ENCODE measurements at regions of chr7 and their contacts with region 1.

Region 1: DNA sequence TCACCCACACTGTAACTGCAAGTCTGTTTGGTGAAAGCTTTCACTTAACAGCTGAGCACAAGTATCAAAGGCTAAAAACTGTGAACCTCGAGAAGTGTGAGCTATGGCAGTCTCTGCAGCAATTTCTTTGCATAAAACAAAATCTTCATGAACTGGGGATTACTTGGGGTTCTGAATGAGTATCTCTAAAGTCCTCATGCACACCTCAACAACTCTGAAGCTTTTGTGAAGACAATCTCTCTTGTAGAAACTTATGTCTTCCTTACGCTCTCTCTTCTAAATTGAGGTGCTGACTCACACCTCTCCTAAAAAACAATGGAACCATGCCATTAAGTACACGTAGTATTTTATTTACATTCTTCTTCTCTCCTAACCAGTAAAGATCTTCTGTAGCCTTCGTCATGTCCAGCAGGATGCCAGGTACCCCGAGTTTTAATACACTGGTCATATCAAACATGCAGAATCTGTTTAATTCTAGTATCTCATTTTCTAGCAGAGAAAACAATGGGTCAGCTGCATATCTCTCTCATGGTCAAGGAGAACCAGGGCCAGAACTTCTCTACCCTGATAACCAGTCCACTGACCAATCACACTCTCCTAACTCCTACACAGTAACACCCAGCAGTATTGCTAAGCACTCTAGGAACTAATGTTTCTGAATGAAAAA is 76.9 kb downstream of the UBE2H start:
- DNase-seq: no peak
- H3K4me3 ChIP-seq: peak overlapping the region in 1 of 4 donors; percentile 8
- H3K27ac ChIP-seq: peak overlapping the region; percentile 5 to 62 (median 56)
- H3K4me1 ChIP-seq: peaks cover 0 to 40% (median 26%) of the 10 kb centered on the region in 4 donors
- H3K27me3 ChIP-seq: no peaks in the 10 kb centered on the region
- CTCF ChIP-seq: no peak
- EP300 ChIP-seq: no peak
- POLR2A ChIP-seq: no peak

Region 2: DNA sequence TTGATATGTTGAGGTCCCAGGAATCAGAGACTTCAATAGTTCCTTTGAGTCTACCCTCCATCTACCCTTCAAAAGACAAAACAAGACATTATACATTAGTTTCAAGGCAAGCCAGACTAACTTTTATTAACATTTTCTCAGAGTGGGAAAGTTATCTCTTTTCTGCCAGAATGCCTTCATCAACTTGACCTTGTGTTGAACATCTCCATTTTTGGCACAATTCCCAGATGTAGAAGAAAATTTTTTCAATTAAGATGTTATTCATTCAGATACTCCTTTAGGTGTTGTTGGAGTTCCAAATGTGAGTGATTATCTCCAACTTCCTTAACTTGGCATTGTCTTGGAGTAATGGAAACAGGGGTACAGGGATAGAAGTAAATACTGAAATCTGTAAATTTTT is 205.2 kb before region 1 on chr7:
- intact Hi-C with region 1: no loop called
- DNase-seq: no peak
- H3K4me3 ChIP-seq: no peak overlapping the region
- H3K27ac ChIP-seq: no peak overlapping the region
- H3K4me1 ChIP-seq: no peaks in the 10 kb centered on the region
- H3K27me3 ChIP-seq: no peaks in the 10 kb centered on the region
- CTCF ChIP-seq: no peak
- EP300 ChIP-seq: no peak
- POLR2A ChIP-seq: no peak

Region 3: DNA sequence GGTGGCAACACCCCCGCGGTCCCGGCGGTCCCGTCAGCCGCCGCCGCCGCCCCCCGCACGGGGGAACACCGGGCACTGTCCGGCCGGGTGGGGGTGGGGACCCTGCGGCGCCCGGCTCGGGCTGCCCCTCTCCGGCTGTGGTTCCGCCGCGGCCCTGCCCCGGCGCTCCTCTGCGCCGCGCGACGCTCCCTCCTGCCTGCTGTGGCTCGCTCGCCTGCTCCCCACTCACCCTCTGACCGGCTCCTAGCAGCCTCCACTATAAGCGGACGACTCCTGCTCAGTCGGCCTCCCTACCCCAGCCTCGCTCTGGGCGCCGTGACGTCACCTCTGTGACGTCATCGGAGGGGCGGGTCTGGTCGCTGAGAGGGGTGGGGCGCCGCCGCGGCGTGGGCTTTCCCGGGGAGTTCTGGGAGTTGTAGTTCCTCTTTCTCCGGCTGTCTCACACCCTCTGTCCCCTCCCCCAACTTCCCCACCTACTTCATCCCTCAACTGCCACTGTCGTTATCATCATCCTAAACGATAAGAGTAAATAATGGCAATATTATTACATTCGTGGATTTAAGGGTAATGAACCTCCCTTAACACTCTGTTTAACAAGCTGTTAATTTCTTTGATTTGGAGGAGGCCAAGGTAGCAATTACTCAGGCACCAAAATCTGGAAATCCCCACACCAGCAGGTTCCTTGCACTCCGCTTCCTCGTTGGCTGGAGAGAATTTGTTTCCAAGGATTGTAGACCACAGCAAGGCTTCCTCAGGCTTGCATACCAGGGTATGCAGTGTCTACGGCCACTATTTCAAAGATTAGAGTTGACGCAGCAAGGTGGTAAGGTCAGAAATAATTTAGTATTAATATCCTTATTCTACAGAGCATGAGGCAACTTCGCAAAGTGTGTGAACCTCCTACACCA is 77.0 kb after region 1 on chr7 and contains the start of gene UBE2H:
- intact Hi-C with region 1: loop called (anchors 5 kb)
- DNase-seq: peak; percentile 96
- H3K4me3 ChIP-seq: peak within 1 kb of the TSS; percentile 86 to 98 (median 92)
- H3K27ac ChIP-seq: peak within 1 kb of the TSS; percentile 96 to 97 (median 96)
- H3K4me1 ChIP-seq: peaks cover 0 to 27% (median 20%) of the 10 kb centered on the region in 4 donors
- H3K27me3 ChIP-seq: no peaks in the 10 kb centered on the region
- CTCF ChIP-seq: no peak
- EP300 ChIP-seq: no peak
- POLR2A ChIP-seq: peak; percentile 91 to 92
- total RNA-seq, gene UBE2H: 68.8 to 99.7 (median 79.1) TPM

Measured in sigmoid colon (tissue), 7 donors.